MCF 10A (cell line): ENCODE measurements at regions of chr3 and their contacts with region 1.

Region 1: GRCh38 chr3:1962396-1963088 is 136.1 kb upstream of the CNTN4 start:
- DNase-seq: no peak
- H3K4me3 Mint-ChIP-seq: no peak overlapping the region
- H3K27ac Mint-ChIP-seq: no peak overlapping the region
- H3K4me1 Mint-ChIP-seq: peaks cover 12% of the 10 kb centered on the region
- H3K27me3 Mint-ChIP-seq: no peaks in the 10 kb centered on the region
- CTCF ChIP-seq: no peak

Region 2: GRCh38 chr3:1910322-1910721 is 52.2 kb before region 1 on chr3:
- CTCF ChIA-PET with region 1: interaction called, 3 read pairs
- POLR2A ChIA-PET with region 1: no interaction called
- intact Hi-C with region 1: loop called (anchors 5 kb)
- DNase-seq: no peak
- H3K4me3 Mint-ChIP-seq: no peak overlapping the region
- H3K27ac Mint-ChIP-seq: no peak overlapping the region
- H3K4me1 Mint-ChIP-seq: peaks cover 14% of the 10 kb centered on the region
- H3K27me3 Mint-ChIP-seq: no peaks in the 10 kb centered on the region
- CTCF ChIP-seq: no peak

Region 3: DNA sequence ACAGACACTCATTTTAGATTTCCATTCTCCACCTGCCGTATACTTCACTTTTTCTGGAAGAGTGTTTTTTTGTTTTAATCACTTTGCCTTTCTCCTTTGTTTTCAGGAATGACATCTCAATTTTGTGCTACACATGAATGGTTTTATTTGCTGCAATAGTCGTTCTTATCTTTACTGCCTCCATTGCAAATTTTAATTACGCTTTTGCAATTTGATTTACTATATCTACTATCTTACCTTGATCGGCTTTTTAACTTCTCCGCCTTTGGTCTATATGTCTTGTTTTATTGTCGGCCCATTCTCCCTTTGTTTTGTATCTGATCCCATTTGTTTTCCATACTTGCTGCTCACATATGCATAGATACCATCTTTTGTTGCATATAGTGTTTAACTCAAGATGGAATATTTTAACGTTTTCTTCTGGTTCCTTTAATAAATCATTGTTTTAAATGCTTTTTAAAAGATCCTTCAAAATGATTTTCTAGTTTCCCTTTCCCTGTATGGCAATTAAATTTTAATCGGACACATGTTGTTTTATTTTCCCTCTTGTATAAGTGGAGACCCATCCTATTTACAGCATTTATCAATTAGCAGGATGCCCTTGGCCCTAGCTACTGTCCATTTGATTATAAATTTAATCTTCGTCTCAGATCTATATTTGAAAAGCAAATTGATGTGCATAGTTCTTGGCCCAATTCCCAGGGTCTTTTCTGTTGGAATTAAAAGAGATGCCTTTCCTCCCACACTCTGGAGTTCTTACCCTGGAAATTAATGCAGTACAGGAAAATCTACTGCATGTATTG is 39.0 kb after region 1 on chr3:
- CTCF ChIA-PET with region 1: no interaction called
- POLR2A ChIA-PET with region 1: no interaction called
- intact Hi-C with region 1: no loop called
- DNase-seq: no peak
- H3K4me3 Mint-ChIP-seq: no peak overlapping the region
- H3K27ac Mint-ChIP-seq: no peak overlapping the region
- H3K4me1 Mint-ChIP-seq: no peaks in the 10 kb centered on the region
- H3K27me3 Mint-ChIP-seq: no peaks in the 10 kb centered on the region
- CTCF ChIP-seq: no peak

Region 4: GRCh38 chr3:2023959-2024358 is 61.4 kb after region 1 on chr3:
- CTCF ChIA-PET with region 1: no interaction called
- POLR2A ChIA-PET with region 1: no interaction called
- intact Hi-C with region 1: no loop called
- DNase-seq: peak; percentile 31
- H3K4me3 Mint-ChIP-seq: no peak overlapping the region
- H3K27ac Mint-ChIP-seq: no peak overlapping the region
- H3K4me1 Mint-ChIP-seq: no peaks in the 10 kb centered on the region
- H3K27me3 Mint-ChIP-seq: no peaks in the 10 kb centered on the region
- CTCF ChIP-seq: no peak